ENCODE measurements at regions of chr1 and their contacts with region 1.

Region 1: DNA sequence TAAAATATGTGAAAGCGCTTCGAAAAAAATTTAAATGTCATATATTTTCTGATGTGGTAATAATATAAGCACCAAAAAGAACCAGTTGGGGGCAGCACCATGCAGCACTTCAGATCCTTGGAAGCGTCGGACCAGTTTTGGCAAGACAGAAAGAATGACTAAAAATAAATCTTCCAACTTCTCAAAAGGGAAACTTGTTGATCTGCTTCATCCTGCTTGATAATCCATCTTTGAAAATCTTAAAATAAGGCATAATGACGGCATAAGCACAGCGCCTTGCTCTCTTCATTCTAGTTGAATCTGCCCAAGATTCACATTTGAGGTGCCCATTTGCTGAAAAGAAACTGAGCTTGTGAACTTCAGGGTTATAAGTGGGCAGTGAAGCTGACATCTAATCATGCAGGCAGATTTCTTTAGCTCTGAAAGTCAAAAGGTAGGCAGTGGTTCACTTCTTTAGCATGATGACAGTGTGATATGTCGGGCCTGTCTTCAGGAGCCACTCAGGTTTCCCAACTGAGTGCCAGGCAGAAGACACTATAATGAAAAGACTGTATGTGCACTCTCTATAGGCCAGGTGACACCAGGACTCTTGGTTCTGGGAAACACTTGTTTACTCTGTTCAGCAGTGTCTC is 19.8 kb upstream of the MUTYH start:
- DNase-seq: no peak
- H3K4me3 ChIP-seq: peak overlapping the region in 1 of 2 donors; percentile 29
- H3K27ac ChIP-seq: peak overlapping the region; percentile 81
- H3K4me1 ChIP-seq: peaks cover 13% of the 10 kb centered on the region
- H3K27me3 ChIP-seq: no peaks in the 10 kb centered on the region
- CTCF ChIP-seq: peak; percentile 31 to 65 (median 53)
- POLR2A ChIP-seq: no peak

Region 2: DNA sequence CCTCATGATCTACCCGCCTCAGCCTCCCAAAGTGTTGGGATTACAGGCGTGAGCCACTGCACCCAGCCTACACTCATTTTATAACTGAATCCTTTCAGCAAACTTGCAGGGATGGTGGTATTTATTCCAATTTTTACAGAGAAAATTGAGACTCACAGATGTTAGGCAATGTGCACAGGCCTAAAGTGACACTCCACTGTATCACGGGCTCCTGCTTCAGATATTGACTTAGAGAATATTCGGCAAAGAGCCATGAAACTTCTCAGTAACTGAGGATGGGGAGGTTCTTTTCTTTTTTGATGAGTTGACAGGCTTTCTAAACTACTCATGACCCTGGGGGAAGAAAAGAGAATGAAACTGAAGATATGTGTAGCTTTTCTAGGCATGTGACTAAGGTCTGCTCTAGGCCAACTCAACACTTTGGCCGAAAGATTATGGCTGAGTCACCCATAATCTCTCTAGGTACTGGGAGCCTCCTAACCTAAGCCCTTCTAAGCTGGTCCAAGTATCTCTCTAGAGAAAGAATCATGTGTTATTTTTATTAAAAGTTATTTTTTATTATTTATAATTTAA is 497.1 kb before region 1 on chr1:
- intact Hi-C with region 1: no loop called
- DNase-seq: no peak
- H3K4me3 ChIP-seq: no peak overlapping the region
- H3K27ac ChIP-seq: no peak overlapping the region
- H3K4me1 ChIP-seq: peaks cover 10% of the 10 kb centered on the region
- H3K27me3 ChIP-seq: no peaks in the 10 kb centered on the region
- CTCF ChIP-seq: no peak
- POLR2A ChIP-seq: no peak

Region 3: GRCh38 chr1:45490626-45491486 is 130.9 kb after region 1 on chr1 and contains the start of gene TESK2:
- intact Hi-C with region 1: loop called (anchors 5 kb)
- DNase-seq: peak; percentile 100
- H3K4me3 ChIP-seq: peak within 1 kb of the TSS; percentile 83 to 86
- H3K27ac ChIP-seq: peak within 1 kb of the TSS; percentile 90
- H3K4me1 ChIP-seq: peaks cover 24% of the 10 kb centered on the region
- H3K27me3 ChIP-seq: no peaks in the 10 kb centered on the region
- CTCF ChIP-seq: peak in 2 of 3 experiments; percentile 15 to 36
- POLR2A ChIP-seq: peak in 1 of 2 donors; percentile 77
- total RNA-seq, gene TESK2: 13.5 TPM

Region 4: GRCh38 chr1:45569962-45570581 is 210.1 kb after region 1 on chr1:
- intact Hi-C with region 1: loop called (anchors 10 kb)
- DNase-seq: no peak
- H3K4me3 ChIP-seq: no peak overlapping the region
- H3K27ac ChIP-seq: peak overlapping the region; percentile 20
- H3K4me1 ChIP-seq: peaks cover 17% of the 10 kb centered on the region
- H3K27me3 ChIP-seq: no peaks in the 10 kb centered on the region
- CTCF ChIP-seq: peak; percentile 87 to 94 (median 90)
- POLR2A ChIP-seq: no peak

Measured in vagina (tissue), 2 donors.